Right ventricle myocardium superior (tissue), 1 donor: ENCODE measurements at regions of chr17 and their contacts with region 1.

Region 1: GRCh38 chr17:33674685-33675084 is 381.6 kb upstream of the ASIC2 start:
- DNase-seq: peak; percentile 69
- ATAC-seq: peak; percentile 93

Region 2: GRCh38 chr17:33038740-33039139 is 635.9 kb before region 1 on chr17:
- intact Hi-C with region 1: loop called (anchors 10 kb)
- DNase-seq: no peak
- ATAC-seq: peak; percentile 22

Region 3: GRCh38 chr17:33520426-33521330 is 154.0 kb before region 1 on chr17:
- intact Hi-C with region 1: loop called (anchors 5 kb)
- DNase-seq: peak; percentile 60
- ATAC-seq: peak; percentile 64